Dendritic cell treated with granulocyte-macrophage colony-stimulating factor and Interleukin-4, amounts not matched to agents 40 ng/mL and 50 ng/mL, for 4 days (primary cell): ENCODE measurements at regions of chr1 and their contacts with region 1.

Region 1: DNA sequence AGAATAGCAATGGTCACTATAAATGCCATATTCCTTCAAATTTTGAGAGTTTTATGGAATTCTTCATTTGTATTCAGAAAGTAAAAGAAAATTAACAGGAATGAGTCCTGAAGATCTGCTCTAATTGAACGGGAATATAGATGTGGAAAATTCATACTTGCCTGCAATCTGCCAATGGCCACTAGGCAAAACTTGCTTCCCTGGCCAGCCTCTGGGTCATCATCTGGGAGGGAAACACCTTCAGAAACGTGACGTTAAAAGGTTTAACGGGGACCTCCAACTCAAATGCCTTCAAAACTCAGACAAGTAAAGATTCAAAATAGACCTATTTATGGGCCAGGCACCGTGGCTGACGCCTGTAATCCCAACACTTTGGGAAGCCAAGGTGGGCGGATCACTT is 21.7 kb upstream of the CTSK start:
- H3K4me3 Mint-ChIP-seq: no peak overlapping the region
- H3K27ac Mint-ChIP-seq: no peak overlapping the region
- H3K4me1 Mint-ChIP-seq: no peaks in the 10 kb centered on the region
- H3K27me3 Mint-ChIP-seq: no peaks in the 10 kb centered on the region

Region 2: GRCh38 chr1:150875207-150876118 is 45.7 kb after region 1 on chr1:
- intact Hi-C with region 1: no loop called
- H3K4me3 Mint-ChIP-seq: peak overlapping the region; percentile 90
- H3K27ac Mint-ChIP-seq: peak overlapping the region; percentile 96
- H3K4me1 Mint-ChIP-seq: peaks cover 14% of the 10 kb centered on the region
- H3K27me3 Mint-ChIP-seq: no peaks in the 10 kb centered on the region

Region 3: DNA sequence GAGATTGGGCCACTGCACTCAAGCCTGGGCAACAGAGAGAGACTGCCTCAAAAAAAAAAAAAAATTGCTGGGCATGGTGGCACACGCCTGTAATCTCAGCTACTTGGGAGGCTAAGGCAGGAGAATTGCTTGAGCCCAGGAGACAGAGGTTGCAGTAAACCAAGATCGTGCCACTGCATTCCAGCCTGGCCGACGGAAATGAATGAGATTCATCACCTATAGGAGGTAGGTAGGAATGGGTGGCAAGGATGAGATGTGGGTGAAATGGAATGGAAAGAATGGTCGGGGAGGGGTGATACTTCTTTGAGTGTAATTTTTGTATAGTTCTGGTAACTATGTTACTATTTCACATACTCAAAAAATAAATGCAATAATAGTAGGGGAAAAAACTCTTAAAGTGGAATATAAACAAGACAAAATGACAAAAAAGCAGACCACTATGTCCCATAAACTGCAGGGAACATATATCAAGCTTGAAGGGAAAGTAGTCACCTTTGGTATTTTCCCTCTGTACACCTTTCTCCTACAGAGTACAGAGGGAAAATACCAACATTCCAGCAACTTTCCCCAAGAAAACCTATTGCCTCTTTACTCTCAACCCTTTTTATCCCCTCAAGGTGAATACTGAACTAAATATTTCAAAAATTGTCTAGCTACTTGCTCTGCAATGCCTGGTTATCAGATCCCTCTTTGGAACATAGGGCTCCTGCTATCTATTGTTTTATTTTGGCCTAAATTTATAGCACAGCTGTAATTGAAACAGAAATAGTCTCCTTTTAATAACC is 72.8 kb after region 1 on chr1:
- intact Hi-C with region 1: no loop called
- H3K4me3 Mint-ChIP-seq: no peak overlapping the region
- H3K27ac Mint-ChIP-seq: no peak overlapping the region
- H3K4me1 Mint-ChIP-seq: peaks cover 5% of the 10 kb centered on the region
- H3K27me3 Mint-ChIP-seq: no peaks in the 10 kb centered on the region

Region 4: DNA sequence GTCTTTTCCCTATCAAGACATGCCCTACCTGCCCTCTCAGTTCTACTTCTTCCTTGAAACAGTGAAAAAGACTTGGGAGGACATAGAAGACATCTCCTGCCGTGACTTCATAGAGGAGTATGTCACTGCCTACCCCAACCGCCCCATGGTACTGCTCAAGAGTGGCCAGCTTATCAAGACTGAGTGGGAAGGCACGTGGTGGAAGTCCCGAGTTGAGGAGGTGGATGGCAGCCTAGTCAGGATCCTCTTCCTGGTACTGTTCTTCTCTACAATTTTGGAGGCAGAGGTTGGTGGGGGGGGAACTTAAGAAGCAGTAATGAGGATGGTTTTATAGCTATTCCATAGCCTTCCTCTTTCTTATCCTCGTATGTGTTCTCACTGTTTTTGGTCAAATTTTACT is 115.1 kb after region 1 on chr1:
- intact Hi-C with region 1: loop called (anchors 10 kb)
- H3K4me3 Mint-ChIP-seq: no peak overlapping the region
- H3K27ac Mint-ChIP-seq: no peak overlapping the region
- H3K4me1 Mint-ChIP-seq: peaks cover 6% of the 10 kb centered on the region
- H3K27me3 Mint-ChIP-seq: no peaks in the 10 kb centered on the region

Region 5: GRCh38 chr1:150995896-150996295 is 166.2 kb after region 1 on chr1:
- intact Hi-C with region 1: loop called (anchors 10 kb)
- H3K4me3 Mint-ChIP-seq: no peak overlapping the region
- H3K27ac Mint-ChIP-seq: no peak overlapping the region
- H3K4me1 Mint-ChIP-seq: peaks cover 19% of the 10 kb centered on the region
- H3K27me3 Mint-ChIP-seq: no peaks in the 10 kb centered on the region